Cardiac septum (tissue), 1 donor: ENCODE measurements at regions of chr12 and their contacts with region 1.

Region 1: DNA sequence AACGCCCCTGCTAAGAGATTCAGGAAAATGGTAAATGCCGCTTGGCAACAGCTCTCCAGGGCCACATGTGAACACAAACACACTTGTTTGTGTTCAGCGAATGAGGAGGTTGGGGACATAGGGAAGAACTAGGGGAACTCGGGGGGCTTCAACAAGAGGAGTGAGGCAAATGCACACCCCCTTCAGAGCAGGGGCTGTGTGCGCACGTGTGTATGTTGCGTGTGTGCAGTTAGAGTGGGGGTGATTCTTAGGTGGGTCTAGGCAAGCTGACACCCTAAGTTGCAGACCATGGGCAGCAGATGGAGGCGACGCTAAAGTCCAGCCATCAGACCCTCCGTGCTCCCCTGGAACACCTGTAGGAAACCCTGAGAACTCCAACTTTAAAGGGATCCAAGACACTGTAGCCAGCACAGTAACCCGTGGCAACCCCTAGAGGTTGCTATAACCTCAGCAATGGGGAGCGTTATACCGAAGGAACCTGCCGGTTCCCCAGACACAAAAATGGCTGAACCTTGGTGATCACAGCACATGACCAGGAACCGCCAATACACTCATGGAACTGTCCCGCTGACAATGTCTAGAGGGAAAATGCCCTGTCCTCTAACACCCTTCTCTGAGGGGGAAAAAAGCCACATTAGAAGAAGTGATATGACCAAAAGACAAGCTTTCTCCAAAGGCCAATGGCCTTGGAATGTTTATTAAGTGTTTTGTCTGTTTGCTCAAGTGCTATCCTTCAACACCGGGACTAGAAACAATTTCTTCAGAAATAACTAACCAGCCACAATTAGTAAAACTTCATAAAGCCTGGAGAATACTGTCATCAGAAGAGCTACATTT is 86.5 kb upstream of the CEP83 start:
- DNase-seq: no peak

Region 2: DNA sequence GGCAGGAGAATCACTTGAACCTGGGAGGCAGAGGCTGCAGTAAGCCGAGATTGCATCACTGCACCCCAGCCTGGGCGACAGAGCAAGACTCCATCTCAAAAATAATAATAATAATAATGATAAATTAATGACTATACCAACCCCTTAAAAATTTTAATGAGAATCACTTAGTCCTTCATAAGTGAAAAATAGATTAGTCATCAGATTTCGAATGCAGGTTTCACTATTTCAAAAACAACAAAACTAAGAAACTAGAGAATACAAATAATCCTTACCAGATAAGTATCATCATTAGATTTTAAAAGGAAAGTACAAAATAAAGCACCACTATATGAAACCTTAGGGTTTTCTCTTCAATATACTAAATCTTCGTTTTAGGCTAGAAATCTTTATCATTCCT is 148.8 kb before region 1 on chr12:
- intact Hi-C with region 1: no loop called
- DNase-seq: no peak

Region 3: GRCh38 chr12:94469522-94469921 is 76.6 kb before region 1 on chr12:
- intact Hi-C with region 1: no loop called
- DNase-seq: no peak

Region 4: GRCh38 chr12:94575645-94576403 is 29.7 kb after region 1 on chr12:
- intact Hi-C with region 1: no loop called
- DNase-seq: no peak

Region 5: DNA sequence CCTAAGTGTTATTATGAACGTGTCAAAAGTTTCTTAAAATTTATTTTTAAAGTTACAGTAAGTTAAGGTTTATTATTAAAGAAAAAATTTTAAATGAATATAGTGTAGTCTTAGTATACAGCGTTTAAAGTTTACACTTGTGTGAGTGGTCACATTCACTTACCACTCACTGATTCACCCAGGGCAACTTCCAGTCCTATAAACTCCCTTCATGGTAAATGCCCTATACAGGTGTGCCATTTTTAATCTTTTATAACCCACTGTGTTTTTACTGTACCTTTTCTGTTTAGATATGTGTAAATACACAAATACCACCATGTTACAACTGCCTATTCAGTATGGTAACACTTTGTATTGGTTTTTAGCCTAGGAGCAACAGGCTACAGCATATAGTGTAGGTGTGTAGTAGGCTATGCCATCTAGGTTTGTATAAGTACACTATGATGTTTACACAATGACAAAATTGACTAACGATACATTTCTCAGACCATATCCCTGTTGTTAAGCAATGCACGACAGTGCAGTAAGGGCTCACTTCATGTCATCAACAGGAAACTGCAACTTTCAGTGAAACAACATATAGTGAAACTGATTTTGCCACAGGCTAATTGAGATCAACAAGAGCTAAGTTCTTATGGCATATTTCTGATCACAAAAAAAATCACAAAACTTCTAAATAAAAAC is 216.2 kb after region 1 on chr12:
- intact Hi-C with region 1: loop called (anchors 5 kb)
- DNase-seq: no peak

Region 6: DNA sequence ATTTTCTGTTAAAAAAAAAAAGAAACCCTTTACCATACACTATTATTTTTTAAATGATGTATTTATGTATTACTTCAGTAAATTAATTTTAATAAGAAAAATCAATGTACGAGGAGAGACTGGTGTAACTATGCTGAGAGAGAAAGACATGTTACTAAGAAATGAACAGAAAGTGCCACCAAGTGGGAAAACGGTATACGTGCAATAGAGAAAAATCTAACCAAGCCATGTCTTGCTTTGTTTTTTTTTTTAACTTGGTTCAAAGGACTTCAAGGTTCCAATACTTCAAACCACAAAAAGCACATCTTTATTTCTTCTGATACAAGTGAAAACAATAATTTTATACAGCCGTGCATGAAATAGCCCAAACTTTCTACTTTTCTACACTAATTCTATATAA is 434.4 kb after region 1 on chr12:
- intact Hi-C with region 1: loop called (anchors 10 kb)
- DNase-seq: no peak